Natural killer cell (primary cell): ENCODE measurements at regions of chr5 and their contacts with region 1.

Region 1: DNA sequence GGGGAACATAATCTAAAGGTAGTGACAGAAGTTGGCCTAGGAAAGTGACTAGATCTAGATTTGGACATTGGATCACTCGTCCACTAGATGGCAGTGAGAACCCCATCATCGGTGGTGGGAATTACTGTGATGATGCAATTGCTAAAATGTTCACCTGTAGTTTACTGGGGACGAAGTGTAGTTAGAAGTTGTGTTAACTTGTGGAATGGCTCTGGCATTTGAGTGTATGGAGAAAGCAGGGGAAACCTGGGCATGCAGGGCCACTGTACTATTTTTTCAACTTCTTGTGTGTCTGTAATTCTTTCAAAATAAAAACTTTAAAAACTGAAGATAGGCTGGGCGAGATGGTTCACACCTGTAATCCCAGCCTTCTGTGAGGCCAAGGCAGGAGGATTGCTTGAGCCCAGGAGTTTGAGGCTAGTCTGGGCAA is 75.5 kb downstream of the PHAX start:
- DNase-seq: peak; percentile 41 to 88
- ATAC-seq: peak; percentile 81 to 96 (median 93)
- H3K4me3 ChIP-seq: no peak overlapping the region
- H3K4me3 Mint-ChIP-seq: no peak overlapping the region
- H3K27ac ChIP-seq: no peak overlapping the region
- H3K27ac Mint-ChIP-seq: peak overlapping the region in 1 of 2 donors; percentile 63
- H3K4me1 ChIP-seq: peaks cover 2% of the 10 kb centered on the region
- H3K4me1 Mint-ChIP-seq: peaks cover 5 to 6% of the 10 kb centered on the region in 2 donors
- H3K27me3 ChIP-seq: no peaks in the 10 kb centered on the region
- H3K27me3 Mint-ChIP-seq: no peaks in the 10 kb centered on the region
- CTCF ChIP-seq: peak; percentile 84

Region 2: GRCh38 chr5:126777974-126778674 is 101.9 kb after region 1 on chr5:
- intact Hi-C with region 1: loop called (anchors 1 kb)
- DNase-seq: peak; percentile 79 to 96
- ATAC-seq: peak; percentile 72 to 85 (median 73)
- H3K4me3 ChIP-seq: peak overlapping the region; percentile 85
- H3K4me3 Mint-ChIP-seq: peak overlapping the region; percentile 97
- H3K27ac ChIP-seq: peak overlapping the region; percentile 86
- H3K27ac Mint-ChIP-seq: peak overlapping the region; percentile 93 to 99
- H3K4me1 ChIP-seq: peaks cover 19% of the 10 kb centered on the region
- H3K4me1 Mint-ChIP-seq: peaks cover 25 to 28% of the 10 kb centered on the region in 2 donors
- H3K27me3 ChIP-seq: no peaks in the 10 kb centered on the region
- H3K27me3 Mint-ChIP-seq: no peaks in the 10 kb centered on the region
- CTCF ChIP-seq: no peak

Region 3: DNA sequence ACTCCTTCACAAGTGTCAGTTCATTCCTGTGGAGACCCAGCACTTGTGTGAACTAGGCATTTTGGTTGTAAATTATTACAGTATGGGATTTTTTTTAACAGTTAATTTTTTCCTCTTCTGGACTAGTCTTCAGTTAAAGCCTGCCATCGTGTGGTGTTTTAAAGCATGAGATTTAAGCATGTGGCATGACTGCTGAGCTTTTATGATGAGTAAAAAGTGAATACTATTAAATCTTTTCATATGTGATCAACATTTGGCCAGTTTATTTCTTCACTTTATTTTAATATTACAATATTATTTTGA is 125.7 kb after region 1 on chr5:
- intact Hi-C with region 1: loop called (anchors 1 kb)
- DNase-seq: peak in 1 of 2 donors; percentile 60
- ATAC-seq: peak in 2 of 3 donors; percentile 54 to 60
- H3K4me3 ChIP-seq: no peak overlapping the region
- H3K4me3 Mint-ChIP-seq: no peak overlapping the region
- H3K27ac ChIP-seq: no peak overlapping the region
- H3K27ac Mint-ChIP-seq: no peak overlapping the region
- H3K4me1 ChIP-seq: no peaks in the 10 kb centered on the region
- H3K4me1 Mint-ChIP-seq: peaks cover 0 to 18% of the 10 kb centered on the region in 2 donors
- H3K27me3 ChIP-seq: no peaks in the 10 kb centered on the region
- H3K27me3 Mint-ChIP-seq: no peaks in the 10 kb centered on the region
- CTCF ChIP-seq: peak; percentile 38

Region 4: DNA sequence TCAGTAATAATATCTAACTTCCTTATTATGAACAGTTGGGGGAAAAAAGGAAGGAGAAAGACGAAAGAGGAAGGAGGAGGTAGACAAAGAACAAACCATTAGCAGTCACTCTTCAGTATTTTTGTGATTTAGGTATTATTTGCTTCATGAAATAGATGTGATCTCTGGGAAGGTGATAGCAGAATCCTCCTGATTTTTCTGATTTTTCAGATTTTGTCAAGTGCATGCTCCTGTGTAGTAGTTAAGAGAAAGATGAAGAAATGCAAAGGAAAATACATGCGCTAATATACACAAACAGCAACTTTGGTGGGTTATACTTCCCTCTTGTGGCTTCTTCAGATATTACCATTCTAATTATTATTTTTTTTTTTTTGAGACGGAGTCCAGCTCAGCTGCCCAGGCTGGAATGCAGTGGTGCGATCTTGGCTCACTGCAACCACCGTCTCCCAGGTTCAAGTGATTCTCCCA is 132.3 kb after region 1 on chr5:
- intact Hi-C with region 1: loop called (anchors 2 kb)
- DNase-seq: peak in 1 of 2 donors; percentile 53
- ATAC-seq: no peak
- H3K4me3 ChIP-seq: no peak overlapping the region
- H3K4me3 Mint-ChIP-seq: no peak overlapping the region
- H3K27ac ChIP-seq: peak overlapping the region; percentile 4
- H3K27ac Mint-ChIP-seq: peak overlapping the region; percentile 94 to 95
- H3K4me1 ChIP-seq: peaks cover 20% of the 10 kb centered on the region
- H3K4me1 Mint-ChIP-seq: peaks cover 27 to 31% of the 10 kb centered on the region in 2 donors
- H3K27me3 ChIP-seq: no peaks in the 10 kb centered on the region
- H3K27me3 Mint-ChIP-seq: no peaks in the 10 kb centered on the region
- CTCF ChIP-seq: peak; percentile 63

Region 5: GRCh38 chr5:126846344-126846743 is 170.1 kb after region 1 on chr5:
- intact Hi-C with region 1: no loop called
- DNase-seq: no peak
- ATAC-seq: no peak
- H3K4me3 ChIP-seq: no peak overlapping the region
- H3K4me3 Mint-ChIP-seq: peak overlapping the region; percentile 47
- H3K27ac ChIP-seq: no peak overlapping the region
- H3K27ac Mint-ChIP-seq: peak overlapping the region; percentile 68 to 76
- H3K4me1 ChIP-seq: peaks cover 6% of the 10 kb centered on the region
- H3K4me1 Mint-ChIP-seq: peaks cover 22 to 40% of the 10 kb centered on the region in 2 donors
- H3K27me3 ChIP-seq: no peaks in the 10 kb centered on the region
- H3K27me3 Mint-ChIP-seq: no peaks in the 10 kb centered on the region
- CTCF ChIP-seq: no peak

Region 6: GRCh38 chr5:127313847-127314473 is 637.8 kb after region 1 on chr5:
- intact Hi-C with region 1: loop called (anchors 1 kb)
- DNase-seq: peak; percentile 43 to 76
- ATAC-seq: peak; percentile 73 to 85 (median 82)
- H3K4me3 ChIP-seq: no peak overlapping the region
- H3K4me3 Mint-ChIP-seq: no peak overlapping the region
- H3K27ac ChIP-seq: no peak overlapping the region
- H3K27ac Mint-ChIP-seq: no peak overlapping the region
- H3K4me1 ChIP-seq: no peaks in the 10 kb centered on the region
- H3K4me1 Mint-ChIP-seq: no peaks in the 10 kb centered on the region
- H3K27me3 ChIP-seq: no peaks in the 10 kb centered on the region
- H3K27me3 Mint-ChIP-seq: peaks cover 6 to 13% of the 10 kb centered on the region in 2 donors
- CTCF ChIP-seq: peak; percentile 82

Region 7: GRCh38 chr5:127492854-127493738 is 816.9 kb after region 1 on chr5:
- intact Hi-C with region 1: loop called (anchors 1 kb)
- DNase-seq: peak in 1 of 2 donors; percentile 57
- ATAC-seq: peak; percentile 39 to 67 (median 53)
- H3K4me3 ChIP-seq: no peak overlapping the region
- H3K4me3 Mint-ChIP-seq: no peak overlapping the region
- H3K27ac ChIP-seq: no peak overlapping the region
- H3K27ac Mint-ChIP-seq: no peak overlapping the region
- H3K4me1 ChIP-seq: no peaks in the 10 kb centered on the region
- H3K4me1 Mint-ChIP-seq: no peaks in the 10 kb centered on the region
- H3K27me3 ChIP-seq: peaks cover 3% of the 10 kb centered on the region
- H3K27me3 Mint-ChIP-seq: peaks cover 26 to 47% of the 10 kb centered on the region in 2 donors
- CTCF ChIP-seq: peak; percentile 94